CD8-positive, alpha-beta T cell (primary cell): ENCODE measurements at regions of chr19 and their contacts with region 1.

Region 1: DNA sequence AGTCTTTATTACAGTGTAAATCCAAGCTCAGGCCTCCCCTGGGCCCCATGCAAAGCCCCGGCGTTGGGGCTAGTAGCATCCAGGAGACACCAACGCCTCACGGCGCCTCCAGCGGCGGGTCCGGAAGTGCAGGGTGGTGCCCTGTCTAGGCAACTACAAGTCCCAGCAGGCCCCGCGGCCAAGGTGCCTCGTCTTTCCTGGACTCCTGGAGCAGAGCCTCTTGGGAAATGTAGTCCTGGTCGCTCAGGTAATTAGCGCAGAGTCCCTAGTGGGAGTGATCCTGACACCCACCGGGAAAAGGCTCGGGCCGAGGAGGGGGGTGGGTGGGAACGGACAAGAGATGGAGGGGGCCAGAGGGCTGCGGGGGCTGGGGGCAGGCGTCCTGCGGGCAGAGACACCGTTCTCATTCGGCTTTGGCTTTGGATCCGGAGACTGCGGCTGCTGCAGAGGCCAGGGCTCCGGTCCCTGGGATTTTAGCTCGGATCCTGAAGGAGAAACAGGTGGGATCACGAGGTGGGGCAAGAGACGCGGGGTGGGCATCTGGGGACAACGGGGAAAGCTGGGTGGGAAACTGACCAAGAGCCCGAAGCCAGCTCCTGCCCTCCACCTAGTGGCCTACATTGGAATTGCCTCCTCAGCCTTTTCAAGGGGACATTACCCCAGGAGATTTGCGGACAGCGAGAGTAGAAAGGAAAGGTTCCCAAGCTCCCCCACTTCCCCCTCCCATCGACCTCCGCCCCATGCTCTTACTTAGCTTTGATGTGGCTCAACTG is 11.4 kb downstream of the RTN2 start:
- DNase-seq: peak; percentile 95 to 99 (median 96)
- ATAC-seq: peak; percentile 99
- H3K4me3 ChIP-seq: peak overlapping the region; percentile 62 to 77
- H3K4me3 Mint-ChIP-seq: peak overlapping the region; percentile 92
- H3K27ac ChIP-seq: peak overlapping the region in 1 of 2 experiments; percentile 14
- H3K27ac Mint-ChIP-seq: peak overlapping the region; percentile 77
- H3K4me1 ChIP-seq: peaks cover 4% of the 10 kb centered on the region
- H3K4me1 Mint-ChIP-seq: peaks cover 7% of the 10 kb centered on the region
- H3K27me3 ChIP-seq: no peaks in the 10 kb centered on the region
- H3K27me3 Mint-ChIP-seq: no peaks in the 10 kb centered on the region
- CTCF ChIP-seq: peak; percentile 87

Region 2: DNA sequence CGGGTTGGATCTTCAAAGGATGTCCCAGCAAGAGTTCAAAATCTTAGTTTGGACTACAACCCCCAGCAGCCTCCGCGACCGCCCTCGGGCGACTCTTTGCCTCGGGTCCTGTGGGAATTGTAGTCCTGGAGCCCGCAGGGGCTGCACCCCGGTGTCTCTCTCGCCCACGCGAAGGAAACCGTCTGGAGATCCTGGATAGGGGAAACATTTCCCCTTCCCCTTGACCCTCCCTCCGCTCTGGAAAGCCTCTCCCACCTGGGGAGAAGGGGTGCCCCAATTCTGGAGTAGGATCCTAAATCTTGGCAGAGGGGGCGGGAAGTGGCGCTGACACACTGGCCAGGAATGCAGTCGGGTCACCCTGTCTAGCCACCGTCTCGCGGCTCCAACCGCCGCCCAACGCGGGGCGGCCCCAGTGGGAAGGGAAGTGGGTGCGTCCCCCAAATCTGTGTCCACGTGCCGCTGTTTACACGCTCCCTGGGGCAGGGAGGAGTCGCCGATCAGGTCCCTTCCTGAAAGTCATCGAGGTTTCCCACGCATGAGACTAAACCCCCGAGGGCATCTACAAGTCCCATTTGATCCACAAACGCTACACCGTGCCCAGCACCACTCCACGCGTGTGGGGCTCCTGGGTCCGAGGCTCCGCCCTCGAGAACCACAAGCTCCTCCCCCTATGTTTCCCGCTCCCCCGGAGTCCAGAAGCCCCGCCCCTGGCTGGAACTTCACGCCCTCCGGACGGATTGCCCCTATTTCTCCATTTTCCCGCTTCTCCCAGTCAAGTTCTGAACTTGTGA is 79.9 kb before region 1 on chr19:
- CTCF ChIA-PET with region 1: interaction called, 4 read pairs
- POLR2A ChIA-PET with region 1: no interaction called
- intact Hi-C with region 1: loop called (anchors 1 kb)
- DNase-seq: peak; percentile 69 to 89 (median 85)
- ATAC-seq: peak; percentile 63
- H3K4me3 ChIP-seq: peak overlapping the region; percentile 63 to 85
- H3K4me3 Mint-ChIP-seq: peak overlapping the region; percentile 97
- H3K27ac ChIP-seq: peak overlapping the region; percentile 68 to 92
- H3K27ac Mint-ChIP-seq: peak overlapping the region; percentile 95
- H3K4me1 ChIP-seq: peaks cover 25% of the 10 kb centered on the region
- H3K4me1 Mint-ChIP-seq: peaks cover 31% of the 10 kb centered on the region
- H3K27me3 ChIP-seq: peaks cover 16 to 26% of the 10 kb centered on the region in 2 experiments
- H3K27me3 Mint-ChIP-seq: peaks cover 26% of the 10 kb centered on the region
- CTCF ChIP-seq: no peak

Region 3: GRCh38 chr19:45439569-45440254 is 45.8 kb before region 1 on chr19:
- CTCF ChIA-PET with region 1: interaction called, 317 read pairs
- POLR2A ChIA-PET with region 1: interaction called, 16 read pairs
- intact Hi-C with region 1: loop called (anchors 1 kb)
- DNase-seq: peak; percentile 76 to 94 (median 86)
- ATAC-seq: peak; percentile 70
- H3K4me3 ChIP-seq: peak overlapping the region; percentile 23 to 71
- H3K4me3 Mint-ChIP-seq: peak overlapping the region; percentile 74
- H3K27ac ChIP-seq: peak overlapping the region; percentile 65 to 81
- H3K27ac Mint-ChIP-seq: no peak overlapping the region
- H3K4me1 ChIP-seq: peaks cover 37% of the 10 kb centered on the region
- H3K4me1 Mint-ChIP-seq: peaks cover 30% of the 10 kb centered on the region
- H3K27me3 ChIP-seq: no peaks in the 10 kb centered on the region
- H3K27me3 Mint-ChIP-seq: no peaks in the 10 kb centered on the region
- CTCF ChIP-seq: peak; percentile 100

Region 4: GRCh38 chr19:45469132-45469944 is 16.2 kb before region 1 on chr19:
- CTCF ChIA-PET with region 1: interaction called, 16 read pairs
- POLR2A ChIA-PET with region 1: interaction called, 7 read pairs
- intact Hi-C with region 1: no loop called
- DNase-seq: peak; percentile 81 to 97 (median 93)
- ATAC-seq: peak; percentile 63
- H3K4me3 ChIP-seq: peak overlapping the region; percentile 85 to 98
- H3K4me3 Mint-ChIP-seq: peak overlapping the region; percentile 93
- H3K27ac ChIP-seq: peak overlapping the region; percentile 99 to 100
- H3K27ac Mint-ChIP-seq: peak overlapping the region; percentile 98
- H3K4me1 ChIP-seq: peaks cover 16% of the 10 kb centered on the region
- H3K4me1 Mint-ChIP-seq: peaks cover 17% of the 10 kb centered on the region
- H3K27me3 ChIP-seq: no peaks in the 10 kb centered on the region
- H3K27me3 Mint-ChIP-seq: peaks cover 15% of the 10 kb centered on the region
- CTCF ChIP-seq: no peak

Region 5: GRCh38 chr19:45506246-45506990 is 20.9 kb after region 1 on chr19:
- CTCF ChIA-PET with region 1: interaction called, 25 read pairs
- POLR2A ChIA-PET with region 1: no interaction called
- intact Hi-C with region 1: loop called (anchors 1 kb)
- DNase-seq: peak; percentile 93 to 99 (median 97)
- ATAC-seq: peak; percentile 79
- H3K4me3 ChIP-seq: peak overlapping the region; percentile 74 to 90
- H3K4me3 Mint-ChIP-seq: peak overlapping the region; percentile 88
- H3K27ac ChIP-seq: peak overlapping the region; percentile 85 to 91
- H3K27ac Mint-ChIP-seq: peak overlapping the region; percentile 93
- H3K4me1 ChIP-seq: peaks cover 33% of the 10 kb centered on the region
- H3K4me1 Mint-ChIP-seq: peaks cover 39% of the 10 kb centered on the region
- H3K27me3 ChIP-seq: no peaks in the 10 kb centered on the region
- H3K27me3 Mint-ChIP-seq: no peaks in the 10 kb centered on the region
- CTCF ChIP-seq: peak; percentile 32

Region 6: DNA sequence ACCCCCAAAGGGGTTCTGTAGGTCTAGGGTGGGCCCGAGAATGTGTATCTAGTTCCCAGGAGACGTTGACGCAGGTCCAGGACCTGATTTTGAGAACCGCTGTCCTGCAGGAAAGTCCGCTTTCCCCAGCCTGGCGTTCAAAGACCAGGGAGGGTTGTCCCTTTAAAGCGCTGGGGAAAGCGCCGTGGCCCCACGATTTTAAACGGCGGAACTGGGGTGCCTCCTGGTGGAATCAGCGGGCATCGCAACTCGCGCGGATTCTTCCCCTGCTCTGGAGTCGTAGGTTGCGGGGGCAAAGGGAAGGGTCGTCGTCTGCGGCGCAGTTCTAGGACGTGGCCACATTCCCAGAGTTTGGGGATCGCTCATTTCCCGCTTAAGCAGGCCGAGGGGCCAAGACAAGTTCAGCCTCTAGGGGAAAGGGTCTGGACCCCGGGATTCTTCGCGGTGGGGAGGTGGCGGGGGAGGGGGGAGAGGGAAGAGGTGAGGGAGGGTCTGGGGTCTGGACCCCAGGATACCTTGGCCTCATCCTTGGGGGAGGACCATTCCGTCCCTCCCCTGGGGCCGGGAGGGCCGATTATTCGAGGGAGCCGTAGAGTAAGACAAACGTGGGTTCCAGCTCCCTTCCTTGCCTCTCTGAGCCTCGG is 1002.4 kb after region 1 on chr19:
- CTCF ChIA-PET with region 1: no interaction called
- POLR2A ChIA-PET with region 1: no interaction called
- intact Hi-C with region 1: no loop called
- DNase-seq: peak; percentile 58 to 86 (median 73)
- ATAC-seq: peak; percentile 87
- H3K4me3 ChIP-seq: no peak overlapping the region
- H3K4me3 Mint-ChIP-seq: no peak overlapping the region
- H3K27ac ChIP-seq: no peak overlapping the region
- H3K27ac Mint-ChIP-seq: no peak overlapping the region
- H3K4me1 ChIP-seq: peaks cover 33% of the 10 kb centered on the region
- H3K4me1 Mint-ChIP-seq: peaks cover 22% of the 10 kb centered on the region
- H3K27me3 ChIP-seq: peaks cover 42 to 46% of the 10 kb centered on the region in 2 experiments
- H3K27me3 Mint-ChIP-seq: peaks cover 58% of the 10 kb centered on the region
- CTCF ChIP-seq: peak; percentile 76